Dendritic cell treated with granulocyte-macrophage colony-stimulating factor and Interleukin-4, amounts not matched to agents 40 ng/mL and 50 ng/mL, for 4 days (primary cell): ENCODE measurements at regions of chr1 and their contacts with region 1.

Region 1: GRCh38 chr1:41739061-41739955 is 179.4 kb downstream of the HIVEP3 start:
- H3K4me3 Mint-ChIP-seq: peak overlapping the region; percentile 58
- H3K27ac Mint-ChIP-seq: peak overlapping the region; percentile 94
- H3K4me1 Mint-ChIP-seq: peaks cover 93% of the 10 kb centered on the region
- H3K27me3 Mint-ChIP-seq: peaks cover 6% of the 10 kb centered on the region

Region 2: DNA sequence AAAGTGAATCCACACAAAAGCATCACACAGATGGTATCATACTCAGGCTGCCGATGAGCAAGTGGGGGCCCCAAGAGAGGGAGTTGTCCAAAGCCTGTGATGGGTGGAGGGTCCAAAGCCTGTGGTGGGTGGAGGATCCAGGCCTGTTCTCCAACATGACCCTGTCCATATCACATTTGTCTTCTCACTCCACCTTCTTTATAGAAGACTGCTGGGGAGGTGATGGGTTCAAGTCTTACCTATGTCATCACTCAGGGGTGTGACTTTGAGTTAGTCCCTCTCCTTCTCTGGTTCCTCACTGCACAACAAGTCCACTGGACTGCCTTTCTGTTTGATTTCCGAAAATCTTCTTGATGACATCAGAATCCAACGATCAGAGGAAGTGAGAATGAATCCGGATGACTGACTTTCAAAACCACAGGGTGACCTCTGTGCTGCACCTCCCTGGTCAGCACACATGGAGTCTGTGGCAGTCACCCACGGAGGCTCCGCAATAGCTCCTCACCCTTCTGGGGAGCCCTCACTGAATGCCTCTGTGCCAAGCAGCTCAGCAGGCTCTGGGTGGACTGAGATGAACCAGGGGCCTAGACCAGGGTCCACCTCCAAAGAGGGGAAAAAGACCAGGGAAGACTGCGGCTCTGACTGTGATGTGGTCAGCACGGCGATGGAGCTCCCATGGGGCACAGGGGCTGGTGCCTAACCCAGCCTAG is 12.7 kb after region 1 on chr1:
- intact Hi-C with region 1: loop called (anchors 1 kb)
- H3K4me3 Mint-ChIP-seq: no peak overlapping the region
- H3K27ac Mint-ChIP-seq: peak overlapping the region; percentile 79
- H3K4me1 Mint-ChIP-seq: peaks cover 51% of the 10 kb centered on the region
- H3K27me3 Mint-ChIP-seq: peaks cover 17% of the 10 kb centered on the region

Region 3: GRCh38 chr1:41851589-41851988 is 112.3 kb after region 1 on chr1:
- intact Hi-C with region 1: no loop called
- H3K4me3 Mint-ChIP-seq: no peak overlapping the region
- H3K27ac Mint-ChIP-seq: no peak overlapping the region
- H3K4me1 Mint-ChIP-seq: peaks cover 49% of the 10 kb centered on the region
- H3K27me3 Mint-ChIP-seq: peaks cover 7% of the 10 kb centered on the region